Activated CD4-positive, alpha-beta T cell treated with anti-CD3 and anti-CD28 coated beads for 36 hours (primary cell): ENCODE measurements at regions of chr11 and their contacts with region 1.

Region 1: DNA sequence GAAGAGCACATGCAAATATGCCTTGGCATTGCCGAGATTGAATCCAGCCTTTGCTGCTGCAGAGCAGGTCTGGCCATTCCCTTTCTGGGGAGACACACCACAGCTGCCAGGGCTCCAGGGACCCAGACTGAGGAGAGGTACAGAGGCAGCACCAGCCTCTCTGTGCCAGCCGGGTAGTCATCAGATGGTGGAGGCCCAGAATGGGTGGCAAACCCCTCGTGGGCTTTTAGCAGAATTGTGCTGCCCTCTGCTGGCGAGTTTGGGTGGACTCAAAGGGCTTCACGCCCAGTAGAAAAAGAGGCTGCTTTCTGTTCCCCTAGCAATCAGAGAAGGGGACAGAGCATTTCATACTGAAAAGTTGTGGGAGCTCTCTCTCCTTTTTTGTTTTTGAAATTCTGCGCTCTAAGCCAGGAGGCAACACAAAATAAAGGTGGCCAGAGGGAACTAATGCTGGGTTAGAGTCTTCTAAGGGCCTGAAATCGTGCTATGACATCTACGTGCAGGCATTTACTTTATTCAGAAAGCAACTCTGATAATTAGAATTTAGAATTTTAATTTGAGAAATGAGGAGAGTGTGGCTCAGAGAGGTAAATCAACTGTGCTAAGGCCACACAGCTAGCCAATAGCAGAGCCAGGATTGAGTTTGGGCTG is 158.8 kb upstream of the NAV2 start:
- DNase-seq: peak; percentile 90
- ATAC-seq: peak; percentile 86
- H3K4me3 Mint-ChIP-seq: no peak overlapping the region
- H3K27ac Mint-ChIP-seq: no peak overlapping the region
- H3K4me1 Mint-ChIP-seq: peaks cover 2% of the 10 kb centered on the region
- H3K27me3 Mint-ChIP-seq: peaks cover 10% of the 10 kb centered on the region

Region 2: DNA sequence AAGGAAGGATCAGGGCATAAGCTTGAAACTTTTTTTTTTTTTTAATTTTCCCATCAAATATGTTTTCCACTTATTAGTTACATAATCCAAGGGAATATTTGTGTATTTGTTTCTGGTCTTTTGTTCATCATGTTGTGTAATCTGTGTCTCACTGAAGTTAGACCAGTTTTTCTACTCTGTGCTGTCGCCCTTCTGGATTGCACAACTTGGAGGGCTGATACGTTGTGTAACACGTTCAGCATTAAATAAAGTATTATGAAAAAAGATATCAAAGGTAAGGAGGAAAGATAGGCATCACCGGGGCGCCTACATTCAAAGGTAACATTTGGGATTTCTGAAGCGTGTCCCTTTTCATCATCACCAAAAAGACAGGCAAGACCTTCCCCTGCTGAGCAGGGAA is 309.7 kb before region 1 on chr11:
- CTCF ChIA-PET with region 1: no interaction called
- POLR2A ChIA-PET with region 1: no interaction called
- intact Hi-C with region 1: no loop called
- DNase-seq: no peak
- ATAC-seq: no peak
- H3K4me3 Mint-ChIP-seq: no peak overlapping the region
- H3K27ac Mint-ChIP-seq: no peak overlapping the region
- H3K4me1 Mint-ChIP-seq: peaks cover 14% of the 10 kb centered on the region
- H3K27me3 Mint-ChIP-seq: peaks cover 43% of the 10 kb centered on the region

Region 3: GRCh38 chr11:19259487-19260345 is 294.1 kb before region 1 on chr11:
- CTCF ChIA-PET with region 1: interaction called, 5 read pairs
- POLR2A ChIA-PET with region 1: no interaction called
- intact Hi-C with region 1: loop called (anchors 1 kb)
- DNase-seq: peak; percentile 81
- ATAC-seq: peak; percentile 76
- H3K4me3 Mint-ChIP-seq: no peak overlapping the region
- H3K27ac Mint-ChIP-seq: no peak overlapping the region
- H3K4me1 Mint-ChIP-seq: no peaks in the 10 kb centered on the region
- H3K27me3 Mint-ChIP-seq: peaks cover 2% of the 10 kb centered on the region

Region 4: GRCh38 chr11:19311308-19312030 is 242.3 kb before region 1 on chr11:
- CTCF ChIA-PET with region 1: interaction called, 6 read pairs
- POLR2A ChIA-PET with region 1: no interaction called
- intact Hi-C with region 1: loop called (anchors 1 to 2 kb)
- DNase-seq: peak; percentile 72
- ATAC-seq: peak; percentile 74
- H3K4me3 Mint-ChIP-seq: no peak overlapping the region
- H3K27ac Mint-ChIP-seq: no peak overlapping the region
- H3K4me1 Mint-ChIP-seq: no peaks in the 10 kb centered on the region
- H3K27me3 Mint-ChIP-seq: peaks cover 2% of the 10 kb centered on the region

Region 5: GRCh38 chr11:19628018-19628417 is 74.2 kb after region 1 on chr11:
- CTCF ChIA-PET with region 1: no interaction called
- POLR2A ChIA-PET with region 1: no interaction called
- intact Hi-C with region 1: no loop called
- DNase-seq: no peak
- ATAC-seq: no peak
- H3K4me3 Mint-ChIP-seq: no peak overlapping the region
- H3K27ac Mint-ChIP-seq: no peak overlapping the region
- H3K4me1 Mint-ChIP-seq: no peaks in the 10 kb centered on the region
- H3K27me3 Mint-ChIP-seq: peaks cover 9% of the 10 kb centered on the region

Region 6: DNA sequence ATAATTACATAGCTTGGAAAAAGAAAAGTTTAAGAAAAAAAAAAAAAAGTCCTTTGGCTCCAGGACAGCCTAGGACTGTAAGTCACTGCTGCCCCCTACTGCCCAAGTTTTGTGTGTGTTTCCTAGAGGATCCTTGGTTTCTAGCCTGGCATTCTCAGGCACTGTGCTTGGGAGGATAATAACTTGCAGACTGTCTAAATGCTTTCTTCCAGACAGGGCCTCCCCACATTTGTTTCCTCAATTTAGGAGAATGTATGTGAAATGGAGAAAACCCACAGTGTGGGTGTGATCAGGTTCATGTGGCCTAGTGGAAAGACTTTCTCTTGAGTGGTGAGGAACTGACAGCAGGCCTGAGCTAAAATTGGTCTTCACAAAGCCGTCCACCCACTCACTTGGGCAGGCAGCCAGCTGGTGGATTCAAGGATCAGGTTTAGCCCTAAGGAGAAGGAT is 349.8 kb after region 1 on chr11:
- CTCF ChIA-PET with region 1: no interaction called
- POLR2A ChIA-PET with region 1: no interaction called
- intact Hi-C with region 1: loop called (anchors 1 to 2 kb)
- DNase-seq: peak; percentile 77
- ATAC-seq: no peak
- H3K4me3 Mint-ChIP-seq: no peak overlapping the region
- H3K27ac Mint-ChIP-seq: no peak overlapping the region
- H3K4me1 Mint-ChIP-seq: no peaks in the 10 kb centered on the region
- H3K27me3 Mint-ChIP-seq: peaks cover 2% of the 10 kb centered on the region